GM13976 (cell line): ENCODE measurements at regions of chr6 and their contacts with region 1.

Region 1: DNA sequence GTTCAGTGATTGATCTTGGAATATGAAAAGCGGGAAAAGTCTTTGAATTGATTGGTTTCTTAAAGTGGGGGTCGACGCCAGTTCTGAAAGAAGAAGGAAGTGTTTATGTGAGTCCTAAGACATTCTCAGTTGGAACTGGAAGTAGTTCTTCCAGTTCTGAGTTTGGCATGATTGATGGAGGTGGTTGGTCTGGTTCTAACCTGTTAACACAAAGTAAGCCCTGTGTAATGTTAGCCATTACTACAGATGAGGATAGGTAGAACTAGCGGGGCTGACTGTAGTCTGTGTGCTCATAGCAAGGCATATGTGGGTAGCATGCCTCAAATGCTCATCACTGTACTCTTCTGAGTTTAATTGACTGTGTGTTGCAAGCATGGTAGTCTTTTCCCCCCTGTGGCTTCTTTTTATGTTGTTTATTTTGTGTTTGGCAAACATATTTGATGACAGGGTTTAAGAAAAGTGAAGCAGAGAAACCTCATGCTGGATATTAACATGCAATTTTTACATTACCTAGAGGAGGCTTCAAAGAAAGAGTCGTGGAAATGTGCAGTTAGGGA is 24.9 kb downstream of the CITED2 start:
- DNase-seq: no peak
- CTCF ChIP-seq: no peak

Region 2: GRCh38 chr6:139134817-139135581 is 214.5 kb before region 1 on chr6 and contains the start of gene HECA:
- in situ Hi-C with region 1: loop called (anchors 5 kb)
- DNase-seq: peak; percentile 95
- CTCF ChIP-seq: no peak

Region 3: DNA sequence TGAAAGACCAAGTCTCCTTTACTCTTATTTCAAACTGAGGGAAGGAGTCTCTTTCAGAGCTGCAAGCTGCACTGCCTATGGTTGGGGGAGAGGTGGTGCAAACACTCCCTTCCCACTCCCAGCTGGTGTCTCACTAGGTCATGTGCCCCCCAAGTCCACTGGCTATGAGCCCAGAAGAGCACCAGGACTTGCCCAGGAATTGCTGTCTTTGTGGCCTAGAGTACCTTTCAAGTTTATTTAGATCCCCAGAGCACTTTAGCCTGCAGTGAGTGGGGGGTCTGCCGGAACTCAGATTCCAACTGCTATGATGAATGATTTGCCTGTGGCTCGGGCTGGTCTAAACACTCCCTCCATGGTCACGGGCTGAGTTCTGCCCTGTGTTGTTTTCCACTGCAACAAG is 217.6 kb after region 1 on chr6:
- in situ Hi-C with region 1: no loop called
- DNase-seq: no peak
- CTCF ChIP-seq: no peak